Naive thymus-derived CD4-positive, alpha-beta T cell (primary cell): ENCODE measurements at regions of chr7 and their contacts with region 1.

Region 1: DNA sequence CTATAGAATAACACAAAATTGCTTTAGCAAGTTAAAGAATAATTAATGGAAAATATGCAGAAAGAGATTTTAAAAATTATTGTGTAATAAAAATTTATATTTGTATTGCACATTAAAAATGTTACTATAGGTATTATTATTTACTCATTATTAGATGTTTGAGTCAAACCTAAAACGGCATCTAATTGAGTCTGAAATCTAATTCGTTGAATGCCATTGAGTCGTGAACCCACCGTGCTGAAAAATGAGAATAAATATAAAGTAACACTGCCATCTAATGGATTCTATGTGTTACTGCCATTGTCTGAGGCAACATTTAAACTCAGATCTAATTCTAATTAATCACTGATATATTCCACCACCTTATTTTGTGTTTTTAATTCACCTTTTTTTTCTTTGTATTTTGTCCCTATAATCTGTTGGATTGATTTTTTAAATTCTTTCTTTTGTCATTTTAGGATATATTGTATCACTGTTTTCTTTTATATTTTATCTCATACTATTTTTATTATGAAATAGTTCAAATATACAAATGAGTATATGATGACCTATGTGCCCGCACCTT is 62.2 kb downstream of the SAMD9 start:
- DNase-seq: peak in 6 of 9 donors; percentile 14 to 57 (median 41)
- ATAC-seq: peak; percentile 77
- H3K4me3 ChIP-seq: no peak overlapping the region
- H3K4me3 Mint-ChIP-seq: no peak overlapping the region
- H3K27ac ChIP-seq: no peak overlapping the region
- H3K27ac Mint-ChIP-seq: no peak overlapping the region
- H3K4me1 ChIP-seq: no peaks in the 10 kb centered on the region
- H3K4me1 Mint-ChIP-seq: peaks cover 0 to 16% (median 7%) of the 10 kb centered on the region in 7 donors
- H3K27me3 ChIP-seq: no peaks in the 10 kb centered on the region
- H3K27me3 Mint-ChIP-seq: peaks cover 0 to 12% (median 6%) of the 10 kb centered on the region in 5 donors

Region 2: DNA sequence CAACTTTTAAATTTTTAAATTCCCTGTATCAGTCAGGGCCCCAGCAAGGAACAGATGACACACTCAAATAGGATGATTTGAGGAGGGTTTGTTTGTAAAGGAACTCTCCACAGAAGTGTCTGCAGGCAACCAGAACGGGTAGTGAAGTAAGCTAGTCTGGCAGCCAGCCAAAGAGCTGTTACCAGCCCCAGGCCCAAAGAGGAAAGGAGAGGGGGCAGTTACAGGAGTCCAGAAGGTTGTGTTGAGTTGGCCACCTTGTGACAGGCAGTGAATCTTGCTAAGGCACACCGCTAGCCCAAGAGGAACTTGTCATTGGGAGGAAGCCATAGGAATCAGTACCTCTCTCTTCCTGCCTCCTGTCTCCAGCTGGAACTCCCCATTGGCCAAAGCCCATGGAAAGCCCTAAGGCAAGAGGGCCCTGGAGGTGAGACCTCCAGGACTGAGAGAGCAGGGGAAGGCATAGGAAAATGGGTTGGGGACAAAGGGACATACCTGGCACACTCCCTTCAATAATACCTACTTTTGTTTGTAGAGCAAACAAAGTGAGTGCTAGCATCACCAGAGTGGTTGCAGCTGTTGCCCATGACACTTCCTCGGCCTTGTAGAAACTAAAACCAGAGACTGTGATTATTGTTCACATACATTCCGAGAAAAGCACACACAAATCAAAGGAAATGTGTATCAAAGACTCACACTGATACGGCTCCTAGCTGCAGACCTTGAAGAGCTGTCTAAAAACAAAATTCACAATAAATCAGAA is 633.8 kb before region 1 on chr7:
- CTCF ChIA-PET with region 1: no interaction called
- POLR2A ChIA-PET with region 1: no interaction called
- intact Hi-C with region 1: loop called (anchors 1 kb)
- DNase-seq: no peak
- ATAC-seq: no peak
- H3K4me3 ChIP-seq: no peak overlapping the region
- H3K4me3 Mint-ChIP-seq: no peak overlapping the region
- H3K27ac ChIP-seq: no peak overlapping the region
- H3K27ac Mint-ChIP-seq: no peak overlapping the region
- H3K4me1 ChIP-seq: peaks cover 0 to 6% of the 10 kb centered on the region in 2 donors
- H3K4me1 Mint-ChIP-seq: peaks cover 5 to 16% (median 11%) of the 10 kb centered on the region in 7 donors
- H3K27me3 ChIP-seq: no peaks in the 10 kb centered on the region
- H3K27me3 Mint-ChIP-seq: peaks cover 2 to 16% (median 9%) of the 10 kb centered on the region in 5 donors

Region 3: GRCh38 chr7:92691578-92691977 is 364.0 kb before region 1 on chr7:
- CTCF ChIA-PET with region 1: no interaction called
- POLR2A ChIA-PET with region 1: no interaction called
- intact Hi-C with region 1: loop called (anchors 1 kb)
- DNase-seq: peak in 7 of 9 donors; percentile 33 to 59 (median 41)
- ATAC-seq: peak; percentile 93
- H3K4me3 ChIP-seq: no peak overlapping the region
- H3K4me3 Mint-ChIP-seq: peak overlapping the region in 4 of 10 donors; percentile 18 to 50 (median 20)
- H3K27ac ChIP-seq: no peak overlapping the region
- H3K27ac Mint-ChIP-seq: peak overlapping the region in 8 of 9 donors; percentile 1 to 75 (median 58)
- H3K4me1 ChIP-seq: peaks cover 12 to 15% of the 10 kb centered on the region in 2 donors
- H3K4me1 Mint-ChIP-seq: peaks cover 7 to 74% (median 38%) of the 10 kb centered on the region in 7 donors
- H3K27me3 ChIP-seq: no peaks in the 10 kb centered on the region
- H3K27me3 Mint-ChIP-seq: no peaks in the 10 kb centered on the region